ENCODE measurements at regions of chr15 and their contacts with region 1.

Region 1: DNA sequence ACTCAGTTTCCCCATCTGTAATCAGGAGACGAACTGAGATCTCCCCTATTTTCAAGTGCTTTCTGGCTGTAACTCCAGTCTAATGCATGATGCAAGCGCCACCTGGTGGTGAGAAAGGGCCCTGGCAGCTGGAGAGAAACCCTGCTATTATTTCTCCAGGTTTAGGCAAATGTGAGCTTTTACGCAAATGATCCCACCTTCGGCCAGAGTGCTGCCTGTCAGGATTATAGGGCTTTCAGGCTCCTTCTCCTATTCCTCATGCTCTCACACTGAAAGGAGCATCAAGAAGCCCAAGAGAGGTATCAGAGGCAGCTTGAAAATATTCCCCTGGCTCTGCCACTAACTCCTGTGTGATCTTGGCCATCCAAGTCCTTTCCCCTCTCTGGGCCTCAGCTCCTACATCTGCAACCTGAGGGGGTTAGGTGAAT is 93.9 kb upstream of the RASGRF1 start:
- DNase-seq: peak; percentile 84
- H3K4me3 Mint-ChIP-seq: no peak overlapping the region
- H3K27ac Mint-ChIP-seq: no peak overlapping the region
- H3K4me1 Mint-ChIP-seq: peaks cover under 1% of the 10 kb centered on the region
- H3K27me3 Mint-ChIP-seq: peaks cover 66% of the 10 kb centered on the region
- CTCF ChIP-seq: peak; percentile 87

Region 2: GRCh38 chr15:78909791-78910228 is 274.7 kb before region 1 on chr15:
- CTCF ChIA-PET with region 1: interaction called, 5 read pairs
- intact Hi-C with region 1: loop called (anchors 1 kb)
- DNase-seq: peak; percentile 67
- H3K4me3 Mint-ChIP-seq: no peak overlapping the region
- H3K27ac Mint-ChIP-seq: peak overlapping the region; percentile 9
- H3K4me1 Mint-ChIP-seq: peaks cover 7% of the 10 kb centered on the region
- H3K27me3 Mint-ChIP-seq: no peaks in the 10 kb centered on the region
- CTCF ChIP-seq: peak; percentile 73

Region 3: DNA sequence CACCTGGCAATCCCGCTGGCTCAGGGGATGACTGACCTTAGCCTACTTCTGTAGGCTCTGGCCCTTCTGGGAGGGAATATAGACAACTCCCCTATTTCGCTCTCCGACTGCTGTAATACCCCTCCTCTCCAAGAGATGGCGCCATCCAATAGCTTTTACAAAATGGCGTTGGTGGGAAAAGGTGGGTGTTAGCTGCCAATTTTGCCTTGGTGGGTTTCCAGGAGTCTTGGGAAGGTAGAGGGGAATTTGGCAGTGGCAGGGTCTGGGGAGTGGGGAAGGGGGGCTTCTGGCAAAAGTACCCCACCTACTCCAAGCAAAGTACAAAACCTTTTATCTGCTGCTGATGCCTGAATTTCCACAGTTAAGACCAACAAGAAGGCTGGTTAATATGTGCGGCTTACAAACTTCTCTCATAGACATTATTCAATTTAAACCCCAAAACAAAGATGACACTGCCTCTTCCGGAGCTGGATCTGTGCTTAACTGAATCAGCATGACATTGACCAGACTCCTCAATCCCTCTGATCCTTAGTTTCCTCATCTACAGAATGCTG is 156.0 kb before region 1 on chr15:
- CTCF ChIA-PET with region 1: interaction called, 40 read pairs
- intact Hi-C with region 1: loop called (anchors 1 kb)
- DNase-seq: peak; percentile 61
- H3K4me3 Mint-ChIP-seq: no peak overlapping the region
- H3K27ac Mint-ChIP-seq: no peak overlapping the region
- H3K4me1 Mint-ChIP-seq: no peaks in the 10 kb centered on the region
- H3K27me3 Mint-ChIP-seq: peaks cover 15% of the 10 kb centered on the region
- CTCF ChIP-seq: peak; percentile 84

Region 4: GRCh38 chr15:79243723-79244122 is 59.2 kb after region 1 on chr15:
- CTCF ChIA-PET with region 1: no interaction called
- intact Hi-C with region 1: no loop called
- DNase-seq: no peak
- H3K4me3 Mint-ChIP-seq: no peak overlapping the region
- H3K27ac Mint-ChIP-seq: no peak overlapping the region
- H3K4me1 Mint-ChIP-seq: no peaks in the 10 kb centered on the region
- H3K27me3 Mint-ChIP-seq: peaks cover 89% of the 10 kb centered on the region
- CTCF ChIP-seq: no peak

Region 5: GRCh38 chr15:79339564-79340314 is 155.3 kb after region 1 on chr15:
- CTCF ChIA-PET with region 1: no interaction called
- intact Hi-C with region 1: no loop called
- DNase-seq: no peak
- H3K4me3 Mint-ChIP-seq: no peak overlapping the region
- H3K27ac Mint-ChIP-seq: no peak overlapping the region
- H3K4me1 Mint-ChIP-seq: peaks cover 13% of the 10 kb centered on the region
- H3K27me3 Mint-ChIP-seq: no peaks in the 10 kb centered on the region
- CTCF ChIP-seq: peak; percentile 78